CD4-positive, alpha-beta memory T cell (primary cell): ENCODE measurements at regions of chr7 and their contacts with region 1.

Region 1: DNA sequence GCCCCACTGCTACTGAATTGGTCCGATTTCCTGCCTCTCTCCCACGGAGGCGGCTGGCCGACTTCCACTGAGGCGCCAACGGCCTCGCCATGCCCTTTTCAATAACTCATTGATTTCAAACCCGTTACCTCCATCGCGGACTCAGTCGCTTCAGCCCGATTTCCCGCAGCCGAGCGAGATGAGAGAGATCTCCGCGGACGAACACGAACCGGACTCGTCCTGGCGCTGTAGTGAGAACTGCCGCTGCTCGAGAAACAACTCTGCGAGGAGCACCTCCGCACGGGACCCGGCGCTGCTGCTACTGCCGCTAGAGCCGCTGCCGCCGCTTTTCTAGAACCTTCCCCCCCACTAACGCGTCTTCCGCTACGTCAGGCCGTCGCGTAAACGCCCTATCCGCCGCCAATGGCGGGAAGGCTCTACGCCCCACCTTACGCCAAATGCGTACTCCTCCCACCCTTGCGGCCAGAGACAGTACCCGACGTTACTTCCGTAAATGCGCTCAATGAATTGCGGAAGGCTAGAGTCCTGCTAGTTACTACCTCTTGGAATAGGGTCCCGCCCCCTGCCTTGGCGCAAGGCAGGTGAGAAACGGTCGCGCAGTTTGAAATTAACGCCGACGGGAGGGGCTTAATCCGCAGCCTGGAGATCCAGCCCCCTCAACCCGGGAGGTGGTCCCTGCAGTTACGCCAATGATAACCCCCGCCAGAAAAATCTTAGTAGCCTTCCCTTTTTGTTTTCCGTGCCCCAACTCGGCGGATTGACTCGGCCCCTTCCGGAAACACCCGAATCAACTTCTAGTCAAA is at the start of gene HNRNPA2B1:
- DNase-seq: peak; percentile 98 to 100 (median 99)
- H3K4me3 ChIP-seq: peak within 1 kb of the TSS; percentile 80 to 89
- H3K4me3 Mint-ChIP-seq: peak within 1 kb of the TSS; percentile 99 to 100 (median 100)
- H3K27ac ChIP-seq: peak within 1 kb of the TSS; percentile 98
- H3K27ac Mint-ChIP-seq: peak within 1 kb of the TSS; percentile 99 to 100 (median 100)
- H3K4me1 ChIP-seq: peaks cover 56% of the 10 kb centered on the region
- H3K4me1 Mint-ChIP-seq: peaks cover 38 to 76% (median 46%) of the 10 kb centered on the region in 4 donors
- H3K27me3 ChIP-seq: no peaks in the 10 kb centered on the region
- H3K27me3 Mint-ChIP-seq: peaks cover 0 to 4% of the 10 kb centered on the region in 2 donors
- total RNA-seq, gene HNRNPA2B1: 450 to 466 TPM

Region 2: DNA sequence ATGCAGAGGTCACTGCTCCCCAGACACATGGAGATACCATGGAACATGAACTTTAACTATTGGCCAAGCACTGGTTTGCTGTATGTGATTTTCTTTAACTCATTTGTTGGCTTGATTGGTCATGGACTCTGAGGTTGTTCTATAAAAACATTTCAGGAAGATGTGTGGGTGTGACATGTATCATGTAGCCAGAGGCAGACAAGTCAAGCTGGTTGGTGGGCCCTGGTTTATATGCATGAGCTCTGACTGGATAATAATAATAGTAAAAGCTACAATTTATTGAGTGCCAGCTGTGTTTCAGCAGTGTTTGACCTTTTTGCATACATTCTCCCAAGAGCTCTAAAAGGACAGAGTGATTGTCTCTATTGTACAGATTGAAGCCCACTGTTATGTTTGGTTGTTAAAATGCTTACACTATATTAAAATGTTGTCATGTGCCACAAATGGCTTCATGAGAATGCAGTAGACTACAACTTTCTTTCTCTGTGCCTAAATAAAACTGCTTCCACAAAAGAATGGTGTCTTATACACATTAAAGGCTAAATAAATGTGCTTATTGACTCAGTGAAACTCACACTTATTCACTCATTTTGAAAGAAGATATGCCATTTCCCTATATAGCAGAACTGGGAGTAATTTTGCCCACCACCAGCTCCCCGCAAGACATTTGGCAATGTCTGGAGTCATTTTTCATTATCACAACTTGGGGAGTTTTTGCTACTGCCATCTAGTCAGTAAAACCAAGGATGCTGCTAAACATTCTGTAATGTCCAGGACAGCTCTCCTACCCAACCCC is 292.3 kb before region 1 on chr7:
- CTCF ChIA-PET with region 1: no interaction called
- POLR2A ChIA-PET with region 1: no interaction called
- intact Hi-C with region 1: no loop called
- DNase-seq: no peak
- H3K4me3 ChIP-seq: no peak overlapping the region
- H3K4me3 Mint-ChIP-seq: no peak overlapping the region
- H3K27ac ChIP-seq: no peak overlapping the region
- H3K27ac Mint-ChIP-seq: no peak overlapping the region
- H3K4me1 ChIP-seq: no peaks in the 10 kb centered on the region
- H3K4me1 Mint-ChIP-seq: no peaks in the 10 kb centered on the region
- H3K27me3 ChIP-seq: no peaks in the 10 kb centered on the region
- H3K27me3 Mint-ChIP-seq: peaks cover 6 to 8% of the 10 kb centered on the region in 2 donors

Region 3: DNA sequence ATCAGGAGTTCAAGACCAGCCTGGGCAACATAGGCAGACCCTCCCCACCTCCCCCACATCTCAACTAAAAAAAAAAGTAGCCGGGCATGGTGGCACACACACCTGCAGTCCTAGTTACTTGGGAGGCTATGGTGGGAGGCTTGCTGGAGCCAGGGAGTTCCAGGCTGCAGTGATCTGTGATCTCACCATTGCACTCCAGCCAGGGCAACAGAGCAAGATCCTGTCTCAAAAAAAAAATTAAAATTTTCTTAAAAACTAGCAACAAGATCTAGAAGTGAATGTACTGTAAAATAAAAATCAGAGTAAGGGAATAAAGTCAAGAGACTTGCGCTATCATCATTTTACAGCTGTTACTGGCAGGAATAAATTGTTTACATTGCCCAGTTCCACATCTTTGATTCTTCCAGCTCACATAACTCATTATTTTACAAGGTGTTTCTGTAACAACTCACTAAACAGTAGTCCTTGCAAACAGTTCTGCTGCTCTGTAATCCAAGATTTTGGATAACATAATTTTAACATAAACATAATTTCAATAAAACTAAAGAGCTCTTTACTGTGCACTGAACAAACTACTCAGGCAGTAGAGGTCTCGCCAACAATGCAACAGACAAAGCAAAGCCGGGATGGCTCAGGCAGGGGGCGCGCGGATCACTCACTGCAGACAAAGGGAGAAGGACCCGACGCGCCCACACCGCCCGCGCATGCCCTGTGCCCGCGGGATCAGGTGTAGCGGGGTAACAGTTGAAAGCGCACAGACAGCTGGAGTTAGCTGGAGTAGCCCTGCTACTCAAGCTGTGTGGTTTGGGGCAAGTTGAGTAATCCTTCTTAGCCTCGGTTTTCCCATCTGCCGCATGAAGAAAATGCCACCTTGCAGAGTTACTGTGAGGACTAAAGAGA is 122.0 kb before region 1 on chr7:
- CTCF ChIA-PET with region 1: interaction called, 24 read pairs
- POLR2A ChIA-PET with region 1: interaction called, 14 read pairs
- intact Hi-C with region 1: no loop called
- DNase-seq: peak; percentile 73 to 82 (median 75)
- H3K4me3 ChIP-seq: no peak overlapping the region
- H3K4me3 Mint-ChIP-seq: peak overlapping the region in 5 of 8 donors; percentile 21 to 65 (median 46)
- H3K27ac ChIP-seq: no peak overlapping the region
- H3K27ac Mint-ChIP-seq: no peak overlapping the region
- H3K4me1 ChIP-seq: peaks cover 8% of the 10 kb centered on the region
- H3K4me1 Mint-ChIP-seq: peaks cover 0 to 10% (median under 1%) of the 10 kb centered on the region in 4 donors
- H3K27me3 ChIP-seq: peaks cover 15% of the 10 kb centered on the region
- H3K27me3 Mint-ChIP-seq: peaks cover 20 to 46% of the 10 kb centered on the region in 2 donors

Region 4: DNA sequence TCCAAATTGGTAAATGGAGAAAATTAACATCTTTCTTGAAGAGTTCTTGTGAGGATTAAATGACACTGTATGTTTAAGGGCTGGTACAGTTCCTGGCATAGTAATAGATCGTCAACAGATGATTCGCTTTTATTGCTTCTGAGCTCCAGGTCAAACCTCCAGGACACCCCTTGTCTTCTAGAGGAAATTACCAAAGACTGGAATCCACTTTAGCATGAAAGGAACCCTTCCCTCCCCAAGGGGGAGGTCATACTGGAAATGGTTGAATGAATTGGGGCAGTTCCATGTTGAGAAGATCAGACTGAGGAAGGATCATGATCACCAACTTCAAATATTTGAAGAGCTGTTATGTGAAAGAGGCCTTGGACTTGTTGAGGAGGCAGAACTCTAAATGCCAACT is 39.8 kb before region 1 on chr7:
- CTCF ChIA-PET with region 1: interaction called, 30 read pairs
- POLR2A ChIA-PET with region 1: interaction called, 169 read pairs
- intact Hi-C with region 1: no loop called
- DNase-seq: no peak
- H3K4me3 ChIP-seq: no peak overlapping the region
- H3K4me3 Mint-ChIP-seq: no peak overlapping the region
- H3K27ac ChIP-seq: no peak overlapping the region
- H3K27ac Mint-ChIP-seq: peak overlapping the region in 4 of 7 donors; percentile 5 to 76 (median 71)
- H3K4me1 ChIP-seq: peaks cover 40% of the 10 kb centered on the region
- H3K4me1 Mint-ChIP-seq: peaks cover 34 to 55% (median 44%) of the 10 kb centered on the region in 4 donors
- H3K27me3 ChIP-seq: no peaks in the 10 kb centered on the region
- H3K27me3 Mint-ChIP-seq: no peaks in the 10 kb centered on the region

Region 5: DNA sequence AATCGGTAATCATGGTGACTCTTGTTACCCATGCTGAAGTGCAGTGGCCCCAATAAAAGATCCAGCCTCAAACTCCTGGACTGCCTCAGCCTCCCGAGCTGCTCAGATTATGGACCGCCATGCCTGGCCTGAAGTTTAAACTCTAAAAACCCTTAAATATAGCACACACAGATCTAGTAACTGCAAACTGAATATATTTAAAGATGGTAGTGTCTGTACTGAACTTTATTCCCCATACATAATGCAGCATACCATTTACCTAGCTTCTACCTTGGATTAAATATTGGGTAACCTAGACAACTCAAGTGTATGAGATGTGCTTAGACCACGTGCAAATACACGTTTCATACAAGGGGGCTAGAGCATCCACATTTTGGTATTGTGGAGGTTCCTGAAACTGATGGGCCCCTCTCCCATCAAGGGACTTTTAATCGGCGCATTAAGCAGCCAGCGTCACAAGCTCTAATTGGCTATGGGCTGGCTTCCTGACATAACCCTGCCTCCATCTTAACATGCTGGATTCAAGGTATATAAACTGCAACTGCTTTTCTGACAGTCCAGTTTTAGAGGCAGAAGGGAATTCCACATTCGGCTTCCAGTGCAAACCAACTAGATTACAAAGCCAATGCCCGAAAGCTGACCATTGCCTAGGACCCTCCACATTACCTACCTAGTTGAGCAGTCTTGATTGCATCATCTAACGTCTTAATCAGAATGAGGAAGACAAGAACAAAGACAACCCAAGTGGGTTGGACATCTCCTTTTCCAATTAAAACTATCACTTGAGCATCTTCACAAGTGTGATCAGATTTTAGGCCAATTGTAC is 13.1 kb before region 1 on chr7:
- CTCF ChIA-PET with region 1: interaction called, 34 read pairs
- POLR2A ChIA-PET with region 1: interaction called, 369 read pairs
- intact Hi-C with region 1: loop called (anchors 1 kb)
- DNase-seq: no peak
- H3K4me3 ChIP-seq: no peak overlapping the region
- H3K4me3 Mint-ChIP-seq: peak overlapping the region in 3 of 8 donors; percentile 7 to 55 (median 17)
- H3K27ac ChIP-seq: no peak overlapping the region
- H3K27ac Mint-ChIP-seq: peak overlapping the region; percentile 52 to 99 (median 75)
- H3K4me1 ChIP-seq: peaks cover 74% of the 10 kb centered on the region
- H3K4me1 Mint-ChIP-seq: peaks cover 51 to 90% (median 74%) of the 10 kb centered on the region in 4 donors
- H3K27me3 ChIP-seq: no peaks in the 10 kb centered on the region
- H3K27me3 Mint-ChIP-seq: no peaks in the 10 kb centered on the region

Region 6: GRCh38 chr7:26291699-26292538 is 91.3 kb after region 1 on chr7 and contains the start of gene SNX10:
- CTCF ChIA-PET with region 1: interaction called, 10 read pairs
- POLR2A ChIA-PET with region 1: interaction called, 38 read pairs
- intact Hi-C with region 1: loop called (anchors 1 kb)
- DNase-seq: peak; percentile 61 to 74 (median 69)
- H3K4me3 ChIP-seq: peak within 1 kb of the TSS; percentile 43 to 61
- H3K4me3 Mint-ChIP-seq: peak within 1 kb of the TSS; percentile 90 to 97 (median 92)
- H3K27ac ChIP-seq: peak within 1 kb of the TSS; percentile 39
- H3K27ac Mint-ChIP-seq: peak within 1 kb of the TSS; percentile 79 to 93 (median 88)
- H3K4me1 ChIP-seq: peaks cover 32% of the 10 kb centered on the region
- H3K4me1 Mint-ChIP-seq: peaks cover 24 to 42% (median 34%) of the 10 kb centered on the region in 4 donors
- H3K27me3 ChIP-seq: no peaks in the 10 kb centered on the region
- H3K27me3 Mint-ChIP-seq: no peaks in the 10 kb centered on the region
- total RNA-seq, gene SNX10: 8.4 to 8.7 TPM

Region 7: GRCh38 chr7:26556071-26556881 is 355.6 kb after region 1 on chr7:
- CTCF ChIA-PET with region 1: no interaction called
- POLR2A ChIA-PET with region 1: no interaction called
- intact Hi-C with region 1: no loop called
- DNase-seq: no peak
- H3K4me3 ChIP-seq: no peak overlapping the region
- H3K4me3 Mint-ChIP-seq: no peak overlapping the region
- H3K27ac ChIP-seq: no peak overlapping the region
- H3K27ac Mint-ChIP-seq: no peak overlapping the region
- H3K4me1 ChIP-seq: no peaks in the 10 kb centered on the region
- H3K4me1 Mint-ChIP-seq: peaks cover 0 to 1% (median 0%) of the 10 kb centered on the region in 4 donors
- H3K27me3 ChIP-seq: no peaks in the 10 kb centered on the region
- H3K27me3 Mint-ChIP-seq: peaks cover 1 to 15% of the 10 kb centered on the region in 2 donors